ENCODE measurements at regions of chr5 and their contacts with region 1.

Region 1: GRCh38 chr5:1385395-1386273 is 40.7 kb upstream of the CLPTM1L start:
- DNase-seq: peak; percentile 81 to 86
- ATAC-seq: peak; percentile 85 to 92 (median 87)
- H3K4me3 ChIP-seq: peak overlapping the region; percentile 62
- H3K4me3 Mint-ChIP-seq: peak overlapping the region; percentile 99
- H3K27ac ChIP-seq: peak overlapping the region; percentile 91
- H3K27ac Mint-ChIP-seq: peak overlapping the region; percentile 96 to 97
- H3K4me1 ChIP-seq: peaks cover 23% of the 10 kb centered on the region
- H3K4me1 Mint-ChIP-seq: peaks cover 23 to 34% of the 10 kb centered on the region in 2 donors
- H3K27me3 ChIP-seq: no peaks in the 10 kb centered on the region
- H3K27me3 Mint-ChIP-seq: peaks cover 0 to 14% of the 10 kb centered on the region in 2 donors
- CTCF ChIP-seq: no peak

Region 2: GRCh38 chr5:1344975-1345838 is 40.4 kb before region 1 on chr5 and contains the start of gene CLPTM1L:
- intact Hi-C with region 1: loop called (anchors 2 kb)
- DNase-seq: peak; percentile 90 to 97
- ATAC-seq: peak; percentile 92 to 96 (median 93)
- H3K4me3 ChIP-seq: peak within 1 kb of the TSS; percentile 79
- H3K4me3 Mint-ChIP-seq: peak within 1 kb of the TSS; percentile 87
- H3K27ac ChIP-seq: peak within 1 kb of the TSS; percentile 77
- H3K27ac Mint-ChIP-seq: peak within 1 kb of the TSS; percentile 80 to 84
- H3K4me1 ChIP-seq: peaks cover 27% of the 10 kb centered on the region
- H3K4me1 Mint-ChIP-seq: peaks cover 16 to 22% of the 10 kb centered on the region in 2 donors
- H3K27me3 ChIP-seq: no peaks in the 10 kb centered on the region
- H3K27me3 Mint-ChIP-seq: no peaks in the 10 kb centered on the region
- CTCF ChIP-seq: no peak
- total RNA-seq, gene CLPTM1L: 67.1 to 105 (median 97.5) TPM

Measured in natural killer cell (primary cell).